HepG2 (cell line): ENCODE measurements at regions of chr19 and their contacts with region 1.

Region 1: DNA sequence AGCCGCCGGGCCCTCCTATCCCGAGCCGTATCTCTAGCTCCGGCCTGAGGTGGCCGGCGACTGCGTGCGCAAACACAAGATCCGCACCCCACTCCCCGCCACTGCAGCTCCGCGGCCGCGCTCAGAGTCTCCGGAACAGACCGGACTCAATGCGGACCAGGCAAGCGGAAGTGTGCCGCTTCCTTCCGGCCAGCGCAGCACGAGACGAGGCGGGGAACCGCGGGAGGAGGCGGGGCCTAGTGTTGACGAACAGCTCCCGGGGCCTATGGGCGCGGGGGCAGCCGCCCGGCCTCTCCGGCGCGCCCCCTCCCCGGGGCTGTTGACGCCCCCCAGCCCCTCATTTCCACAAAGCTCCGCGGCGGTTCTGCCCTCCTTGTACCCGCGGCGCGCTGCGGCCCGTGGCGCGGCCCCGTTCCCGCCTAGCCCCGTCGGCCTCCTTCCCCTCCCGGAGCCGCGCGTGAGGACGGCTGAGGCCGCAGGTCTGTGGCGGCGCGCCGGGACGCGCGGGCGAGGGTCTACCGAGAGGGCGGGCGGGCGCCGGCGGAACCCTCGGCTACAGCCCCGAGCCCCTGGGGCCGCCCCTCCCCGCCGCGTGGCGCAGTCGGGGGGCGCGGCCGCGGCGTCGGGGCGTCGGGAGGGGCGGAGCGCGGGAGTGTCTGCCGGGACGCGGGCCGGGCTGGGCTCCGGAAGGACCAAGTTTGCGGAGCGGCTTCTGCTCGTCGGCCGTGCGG is at the start of gene DPY19L3:
- DNase-seq: peak; percentile 88
- ATAC-seq: peak; percentile 96
- H3K4me3 ChIP-seq: peak within 1 kb of the TSS; percentile 82 to 95 (median 90)
- H3K27ac ChIP-seq: peak within 1 kb of the TSS; percentile 95
- H3K4me1 ChIP-seq: peaks cover 37% of the 10 kb centered on the region
- H3K27me3 ChIP-seq: no peaks in the 10 kb centered on the region; a peak in 1 of 5 replicates
- CTCF ChIP-seq: peak; percentile 21
- EP300 ChIP-seq: 0 out of 4 replicates have a peak, but pooled peaks of 1 of the 2 experiments have one; percentile 12
- POLR2A ChIP-seq: peak; percentile 94 to 96
- RAD21 ChIP-seq: no peak; the same call in none of the 2 replicates
- total RNA-seq, gene DPY19L3: 9.8 and 25.2 TPM in 2 replicates

Region 2: DNA sequence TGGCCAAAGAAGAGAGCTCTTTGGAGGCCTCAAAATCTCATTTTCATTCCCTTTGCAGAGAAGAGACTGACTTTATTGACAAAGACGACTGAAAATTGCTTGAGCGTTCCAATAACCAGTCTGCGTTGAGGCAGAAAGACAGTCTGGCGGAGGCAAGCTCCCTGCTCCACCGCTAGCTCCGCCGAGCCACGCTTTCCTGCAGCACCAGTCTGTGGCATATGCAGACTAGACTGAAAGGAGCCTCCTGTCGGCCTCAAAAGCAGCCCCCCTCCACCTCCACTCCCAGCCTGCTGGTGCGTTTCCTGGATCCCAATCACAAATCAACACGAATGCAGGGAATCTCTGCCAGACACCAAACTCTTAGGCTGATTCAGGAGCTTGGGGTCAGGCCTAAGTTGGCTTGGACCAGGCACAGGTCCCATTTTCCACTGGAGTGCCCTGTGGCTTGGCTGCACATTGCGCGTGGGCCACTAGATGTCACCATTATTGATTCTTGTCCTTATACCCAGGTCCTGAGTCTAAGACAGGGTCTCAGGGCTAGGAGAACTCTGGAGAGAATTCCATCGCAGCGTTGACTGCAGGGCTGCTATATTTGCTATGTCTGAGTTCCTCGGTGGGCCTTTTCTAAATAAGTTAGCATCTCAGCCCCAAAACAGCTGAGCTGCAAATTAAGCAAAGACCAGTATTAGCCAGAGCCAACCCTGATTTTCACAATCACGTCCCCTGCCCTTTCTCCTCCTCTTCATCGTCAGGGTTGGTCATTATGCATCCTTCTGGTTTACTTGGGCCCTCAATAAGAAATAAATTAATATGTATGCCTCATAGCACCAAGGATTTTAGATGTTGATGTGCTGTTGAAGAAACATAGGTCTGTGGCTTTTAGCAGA is 65.4 kb before region 1 on chr19:
- CTCF ChIA-PET with region 1: no interaction called
- POLR2A ChIA-PET with region 1: interaction called, 21 read pairs
- in situ Hi-C with region 1: no loop called
- intact Hi-C with region 1: no loop called
- DNase-seq: peak; percentile 46
- ATAC-seq: peak; percentile 87
- H3K4me3 ChIP-seq: no peak overlapping the region; a peak in 1 of 6 replicates
- H3K27ac ChIP-seq: no peak overlapping the region
- H3K4me1 ChIP-seq: peaks cover 46% of the 10 kb centered on the region
- H3K27me3 ChIP-seq: no peaks in the 10 kb centered on the region
- CTCF ChIP-seq: peak; percentile 84
- EP300 ChIP-seq: no peak
- POLR2A ChIP-seq: no peak
- RAD21 ChIP-seq: peak; percentile 56; the same call in 1 of the 2 replicates

Region 3: GRCh38 chr19:32345261-32346207 is 60.1 kb before region 1 on chr19 and contains the start of gene ZNF507:
- CTCF ChIA-PET with region 1: no interaction called
- POLR2A ChIA-PET with region 1: interaction called, 16 read pairs
- in situ Hi-C with region 1: no loop called
- intact Hi-C with region 1: no loop called
- DNase-seq: peak; percentile 59
- ATAC-seq: peak; percentile 82
- H3K4me3 ChIP-seq: peak within 1 kb of the TSS; percentile 84 to 96 (median 94)
- H3K27ac ChIP-seq: peak within 1 kb of the TSS; percentile 76
- H3K4me1 ChIP-seq: peaks cover 53% of the 10 kb centered on the region
- H3K27me3 ChIP-seq: no peaks in the 10 kb centered on the region; a peak in 1 of 5 replicates
- CTCF ChIP-seq: peak; percentile 13; the same call in 1 of the 2 replicates
- EP300 ChIP-seq: no peak
- POLR2A ChIP-seq: peak; percentile 47 to 58; a peak in 3 of 4 replicates
- RAD21 ChIP-seq: no peak; the same call in 1 of the 2 replicates
- total RNA-seq, gene ZNF507: 7.3 and 16.4 TPM in 2 replicates

Region 4: GRCh38 chr19:32580901-32581703 is 175.5 kb after region 1 on chr19 and contains the start of gene PDCD5:
- CTCF ChIA-PET with region 1: no interaction called
- POLR2A ChIA-PET with region 1: interaction called, 10 read pairs
- in situ Hi-C with region 1: loop called (anchors 5 kb)
- intact Hi-C with region 1: no loop called
- DNase-seq: peak; percentile 84
- ATAC-seq: peak; percentile 96
- H3K4me3 ChIP-seq: peak within 1 kb of the TSS; percentile 94 to 96 (median 95)
- H3K27ac ChIP-seq: peak within 1 kb of the TSS; percentile 84
- H3K4me1 ChIP-seq: peaks cover 34% of the 10 kb centered on the region
- H3K27me3 ChIP-seq: no peaks in the 10 kb centered on the region; a peak in 1 of 5 replicates
- CTCF ChIP-seq: peak; percentile 2; the same call in 1 of the 2 replicates
- EP300 ChIP-seq: no peak
- POLR2A ChIP-seq: peak; percentile 86 to 95
- RAD21 ChIP-seq: no peak
- total RNA-seq, gene PDCD5: 332 and 370 TPM in 2 replicates